ENCODE measurements at regions of chr3 and their contacts with region 1.

Region 1: DNA sequence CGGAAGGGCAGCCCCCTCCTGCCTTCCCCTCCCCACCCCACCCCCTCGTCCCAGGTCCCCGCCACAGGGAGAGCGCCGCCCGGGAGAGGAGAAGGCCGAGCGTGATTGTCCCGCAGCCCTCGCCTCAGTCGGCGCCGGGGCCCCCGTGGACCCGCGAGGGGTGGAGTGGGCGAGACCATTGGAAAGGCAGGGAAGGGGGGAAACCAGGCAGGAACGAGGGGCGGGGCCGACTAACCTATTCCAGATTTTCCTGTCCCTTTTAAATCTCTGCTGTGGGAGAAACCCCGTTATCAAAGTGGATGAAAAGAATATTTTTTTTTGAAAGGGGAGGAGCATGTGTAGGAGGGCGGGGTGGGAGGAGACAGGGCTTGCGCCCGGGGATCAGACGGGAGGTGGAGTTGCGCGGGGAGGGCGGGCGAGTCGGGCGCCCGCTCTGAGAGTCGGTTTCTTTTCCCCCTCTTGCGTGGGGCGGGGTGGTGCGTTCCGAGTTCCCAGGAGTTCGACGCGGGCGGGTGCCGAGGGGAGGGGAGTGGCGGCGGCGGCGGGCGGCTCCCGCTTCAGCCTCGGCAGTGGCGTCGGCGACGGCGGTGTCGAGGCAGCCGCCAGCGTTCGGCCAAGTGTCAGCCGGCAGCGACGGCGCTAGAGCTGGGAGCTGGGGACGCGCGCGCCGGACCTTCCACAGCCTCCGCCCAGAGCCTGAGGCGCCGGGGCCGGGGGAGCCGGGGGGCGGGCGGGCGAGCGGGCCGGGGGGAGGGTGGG is at the start of gene NECTIN3:
- DNase-seq: peak; percentile 95 to 97
- H3K4me3 ChIP-seq: peak within 1 kb of the TSS; percentile 92
- H3K4me3 Mint-ChIP-seq: peak within 1 kb of the TSS; percentile 98
- H3K27ac Mint-ChIP-seq: peak within 1 kb of the TSS; percentile 77
- H3K4me1 ChIP-seq: peaks cover 20% of the 10 kb centered on the region
- H3K4me1 Mint-ChIP-seq: peaks cover 15% of the 10 kb centered on the region
- H3K27me3 ChIP-seq: no peaks in the 10 kb centered on the region
- H3K27me3 Mint-ChIP-seq: no peaks in the 10 kb centered on the region
- CTCF ChIP-seq: no peak
- total RNA-seq, gene NECTIN3: 75.8 and 81.0 TPM in 2 replicates

Region 2: GRCh38 chr3:109731620-109732473 is 1339.6 kb before region 1 on chr3:
- CTCF ChIA-PET with region 1: no interaction called
- POLR2A ChIA-PET with region 1: no interaction called
- intact Hi-C with region 1: loop called (anchors 10 kb)
- DNase-seq: peak; percentile 46 to 52
- H3K4me3 ChIP-seq: no peak overlapping the region
- H3K4me3 Mint-ChIP-seq: no peak overlapping the region
- H3K27ac Mint-ChIP-seq: no peak overlapping the region
- H3K4me1 ChIP-seq: no peaks in the 10 kb centered on the region
- H3K4me1 Mint-ChIP-seq: no peaks in the 10 kb centered on the region
- H3K27me3 ChIP-seq: no peaks in the 10 kb centered on the region
- H3K27me3 Mint-ChIP-seq: no peaks in the 10 kb centered on the region
- CTCF ChIP-seq: peak; percentile 78 to 83

Region 3: DNA sequence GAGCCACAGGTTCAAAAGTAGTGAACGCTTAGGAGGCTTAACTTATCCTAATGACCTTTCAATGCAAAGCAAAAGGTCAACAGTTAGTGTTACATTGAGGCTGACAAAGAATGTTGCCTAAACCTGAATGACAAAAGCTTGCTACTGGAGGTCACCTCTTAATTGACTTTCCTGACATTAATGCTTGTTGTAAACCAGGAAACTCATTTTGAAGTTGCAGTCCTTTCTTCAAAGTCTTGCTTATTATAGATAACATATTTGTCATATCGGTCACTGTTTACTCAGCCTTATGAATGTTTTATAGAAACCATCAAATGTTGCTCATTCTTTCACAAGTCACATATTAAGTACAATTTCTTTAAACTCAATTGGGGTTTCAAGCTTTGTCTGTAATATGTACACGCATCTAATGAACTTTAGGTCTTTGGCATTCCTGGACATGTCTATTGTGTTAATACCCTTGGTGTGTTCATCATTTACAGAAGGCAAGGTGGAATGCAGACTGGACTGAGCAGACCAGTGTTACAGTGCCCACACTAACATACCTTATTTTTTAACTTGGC is 488.0 kb before region 1 on chr3:
- CTCF ChIA-PET with region 1: no interaction called
- POLR2A ChIA-PET with region 1: no interaction called
- intact Hi-C with region 1: loop called (anchors 1 kb)
- DNase-seq: peak; percentile 49 to 68
- H3K4me3 ChIP-seq: no peak overlapping the region
- H3K4me3 Mint-ChIP-seq: peak overlapping the region; percentile 29
- H3K27ac Mint-ChIP-seq: peak overlapping the region; percentile 56
- H3K4me1 ChIP-seq: peaks cover 29% of the 10 kb centered on the region
- H3K4me1 Mint-ChIP-seq: peaks cover 22% of the 10 kb centered on the region
- H3K27me3 ChIP-seq: no peaks in the 10 kb centered on the region
- H3K27me3 Mint-ChIP-seq: no peaks in the 10 kb centered on the region
- CTCF ChIP-seq: no peak

Region 4: DNA sequence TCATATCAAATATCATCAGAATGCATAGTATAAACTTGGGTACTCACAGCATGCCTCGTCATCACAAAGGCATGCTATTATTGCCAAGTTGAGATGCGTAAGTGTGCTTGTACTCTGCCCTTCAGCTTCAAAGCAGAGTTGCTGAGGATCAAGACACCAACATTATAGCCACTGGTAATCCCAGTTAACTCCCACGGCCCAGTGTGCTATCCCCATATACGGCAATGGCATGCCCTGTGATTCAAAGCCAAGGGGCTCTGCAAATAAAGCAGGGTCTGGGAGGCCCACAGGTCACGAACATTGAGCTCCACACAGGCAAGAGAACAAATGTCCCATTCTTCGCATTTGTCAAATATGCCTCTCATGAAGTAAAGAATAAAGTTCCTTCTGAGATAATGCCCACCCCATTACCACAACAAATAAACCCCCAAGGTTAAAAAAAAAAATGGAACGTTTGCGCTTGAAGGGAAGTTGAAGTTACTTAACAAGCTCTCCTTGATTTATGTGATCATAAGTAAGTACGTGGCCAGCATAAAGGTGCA is 298.0 kb before region 1 on chr3:
- CTCF ChIA-PET with region 1: no interaction called
- POLR2A ChIA-PET with region 1: interaction called, 3 read pairs
- intact Hi-C with region 1: loop called (anchors 5 kb)
- DNase-seq: peak; percentile 81 to 94
- H3K4me3 ChIP-seq: no peak overlapping the region
- H3K4me3 Mint-ChIP-seq: no peak overlapping the region
- H3K27ac Mint-ChIP-seq: peak overlapping the region; percentile 65
- H3K4me1 ChIP-seq: peaks cover 36% of the 10 kb centered on the region
- H3K4me1 Mint-ChIP-seq: peaks cover 28% of the 10 kb centered on the region
- H3K27me3 ChIP-seq: no peaks in the 10 kb centered on the region
- H3K27me3 Mint-ChIP-seq: no peaks in the 10 kb centered on the region
- CTCF ChIP-seq: no peak

Region 5: GRCh38 chr3:111012388-111013248 is 58.8 kb before region 1 on chr3:
- CTCF ChIA-PET with region 1: no interaction called
- POLR2A ChIA-PET with region 1: interaction called, 3 read pairs
- intact Hi-C with region 1: loop called (anchors 2 kb)
- DNase-seq: peak; percentile 50 to 56
- H3K4me3 ChIP-seq: no peak overlapping the region
- H3K4me3 Mint-ChIP-seq: no peak overlapping the region
- H3K27ac Mint-ChIP-seq: no peak overlapping the region
- H3K4me1 ChIP-seq: no peaks in the 10 kb centered on the region
- H3K4me1 Mint-ChIP-seq: peaks cover 6% of the 10 kb centered on the region
- H3K27me3 ChIP-seq: no peaks in the 10 kb centered on the region
- H3K27me3 Mint-ChIP-seq: no peaks in the 10 kb centered on the region
- CTCF ChIP-seq: peak in 1 of 2 experiments; percentile 31

Region 6: DNA sequence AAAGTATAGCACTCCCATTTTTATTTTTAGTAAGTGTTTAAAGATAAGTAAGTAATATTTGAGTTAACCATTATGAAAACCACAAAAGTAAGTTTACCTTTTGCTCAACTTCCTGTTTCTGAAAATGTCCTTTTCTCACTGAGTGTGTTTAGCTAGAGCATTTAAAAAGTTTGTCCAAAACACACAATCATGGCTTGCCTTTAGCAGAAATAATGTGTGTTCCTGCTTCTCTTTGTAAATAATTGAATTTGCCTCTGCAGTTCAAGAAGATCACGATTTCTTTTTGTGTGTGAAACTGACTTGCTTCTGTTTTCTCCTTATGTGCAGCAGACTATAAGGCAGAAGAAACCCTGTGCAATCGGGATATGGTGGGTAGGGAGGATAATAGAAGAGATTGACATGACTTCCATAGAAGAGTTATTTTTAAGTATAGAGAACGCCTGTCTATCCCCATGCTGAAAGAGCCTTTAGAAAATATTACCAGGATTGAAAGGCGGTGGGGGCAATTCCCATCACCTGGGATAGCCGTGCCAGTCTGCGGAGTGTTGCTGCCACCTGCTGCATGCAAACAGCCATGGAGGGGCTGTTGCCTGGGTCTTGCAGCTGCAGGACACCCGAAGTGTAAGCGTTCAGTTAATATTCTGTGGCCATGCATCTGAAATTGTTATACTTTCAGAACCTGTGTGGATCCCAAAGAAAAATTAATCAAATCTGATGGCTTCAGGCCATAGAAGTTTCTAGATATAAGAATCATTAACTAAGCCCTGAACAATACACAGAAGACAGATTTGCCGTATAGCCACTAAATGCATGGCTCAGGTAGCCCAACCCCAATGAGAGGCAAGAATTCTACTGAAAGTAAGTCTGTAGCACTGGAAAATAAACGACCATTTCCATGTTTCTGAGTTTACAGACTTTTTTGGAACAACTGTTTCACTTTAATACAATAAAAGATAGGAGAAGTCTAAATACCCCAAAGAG is 468.2 kb after region 1 on chr3:
- CTCF ChIA-PET with region 1: no interaction called
- POLR2A ChIA-PET with region 1: no interaction called
- intact Hi-C with region 1: loop called (anchors 5 kb)
- DNase-seq: peak; percentile 72 to 73
- H3K4me3 ChIP-seq: no peak overlapping the region
- H3K4me3 Mint-ChIP-seq: no peak overlapping the region
- H3K27ac Mint-ChIP-seq: no peak overlapping the region
- H3K4me1 ChIP-seq: peaks cover 14% of the 10 kb centered on the region; the same call in 1 of the 2 replicates
- H3K4me1 Mint-ChIP-seq: peaks cover 11% of the 10 kb centered on the region
- H3K27me3 ChIP-seq: no peaks in the 10 kb centered on the region
- H3K27me3 Mint-ChIP-seq: no peaks in the 10 kb centered on the region
- CTCF ChIP-seq: peak; percentile 80 to 85